ENCODE measurements at regions of chr5 and their contacts with region 1.

Region 1: GRCh38 chr5:80960531-80961375 is 590 bp downstream of the RASGRF2 start:
- DNase-seq: peak; percentile 21
- ATAC-seq: peak; percentile 70
- H3K4me3 ChIP-seq: peak overlapping the region; percentile 86
- H3K27ac ChIP-seq: peak overlapping the region; percentile 86
- H3K4me1 ChIP-seq: peaks cover 7% of the 10 kb centered on the region; the same call in 1 of the 2 replicates
- H3K27me3 ChIP-seq: no peaks in the 10 kb centered on the region
- CTCF ChIP-seq: peak; percentile 30
- POLR2A ChIP-seq: no peak
- RAD21 ChIP-seq: no peak; the same call in 1 of the 2 replicates

Region 2: GRCh38 chr5:80711938-80712337 is 248.8 kb before region 1 on chr5:
- CTCF ChIA-PET with region 1: interaction called, 3 read pairs
- POLR2A ChIA-PET with region 1: no interaction called
- dilution Hi-C with region 1: no loop called
- in situ Hi-C with region 1: no loop called
- intact Hi-C with region 1: loop called (anchors 5 kb)
- DNase-seq: peak; percentile 34
- ATAC-seq: peak; percentile 86
- H3K4me3 ChIP-seq: no peak overlapping the region
- H3K27ac ChIP-seq: no peak overlapping the region
- H3K4me1 ChIP-seq: peaks cover 3% of the 10 kb centered on the region
- H3K27me3 ChIP-seq: no peaks in the 10 kb centered on the region
- CTCF ChIP-seq: peak; percentile 44
- POLR2A ChIP-seq: no peak
- RAD21 ChIP-seq: peak; percentile 65

Region 3: DNA sequence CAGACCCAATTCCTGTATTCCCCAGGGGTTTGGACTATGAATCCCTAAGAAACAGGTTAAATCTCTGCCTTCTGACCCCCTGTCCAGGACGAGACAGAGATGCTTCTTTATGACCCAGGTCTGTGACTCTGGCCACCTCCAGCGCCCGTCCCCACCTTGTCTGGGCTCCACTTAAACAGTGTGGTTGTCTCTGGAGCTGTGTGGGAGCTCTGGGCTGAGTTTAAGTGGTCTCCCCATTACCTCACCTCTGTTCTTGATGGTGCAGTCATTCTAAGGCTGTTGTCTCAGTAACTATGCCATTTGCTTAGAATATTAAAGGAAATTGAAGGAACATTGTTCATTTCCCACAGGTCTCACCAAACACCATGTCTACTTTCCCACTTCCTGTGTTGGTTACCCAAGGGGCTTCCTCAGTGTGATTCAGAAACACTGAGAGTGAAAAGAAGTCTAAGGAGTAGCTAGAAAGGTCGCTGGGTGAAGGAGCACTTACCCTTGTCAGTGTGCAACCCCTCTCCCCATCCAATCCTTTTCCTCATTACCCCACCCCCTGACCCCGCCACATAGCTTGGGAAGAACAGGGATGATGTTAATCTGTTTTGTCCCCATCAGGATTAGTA is 144.6 kb after region 1 on chr5:
- CTCF ChIA-PET with region 1: interaction called, 15 read pairs
- POLR2A ChIA-PET with region 1: no interaction called
- dilution Hi-C with region 1: no loop called
- in situ Hi-C with region 1: no loop called
- intact Hi-C with region 1: loop called (anchors 1 kb)
- DNase-seq: no peak
- ATAC-seq: no peak
- H3K4me3 ChIP-seq: no peak overlapping the region
- H3K27ac ChIP-seq: no peak overlapping the region
- H3K4me1 ChIP-seq: no peaks in the 10 kb centered on the region
- H3K27me3 ChIP-seq: no peaks in the 10 kb centered on the region
- CTCF ChIP-seq: no peak
- POLR2A ChIP-seq: no peak
- RAD21 ChIP-seq: no peak

Region 4: GRCh38 chr5:81194633-81195333 is 234.0 kb after region 1 on chr5:
- CTCF ChIA-PET with region 1: no interaction called
- POLR2A ChIA-PET with region 1: no interaction called
- dilution Hi-C with region 1: no loop called
- in situ Hi-C with region 1: no loop called
- intact Hi-C with region 1: loop called (anchors 1 kb)
- DNase-seq: peak; percentile 70
- ATAC-seq: peak; percentile 100
- H3K4me3 ChIP-seq: no peak overlapping the region
- H3K27ac ChIP-seq: no peak overlapping the region
- H3K4me1 ChIP-seq: no peaks in the 10 kb centered on the region; the same call in 1 of the 2 replicates
- H3K27me3 ChIP-seq: no peaks in the 10 kb centered on the region
- CTCF ChIP-seq: peak; percentile 95
- POLR2A ChIP-seq: no peak
- RAD21 ChIP-seq: peak; percentile 94